Tibial artery (tissue), 4 donors: ENCODE measurements at regions of chr11 and their contacts with region 1.

Region 1: DNA sequence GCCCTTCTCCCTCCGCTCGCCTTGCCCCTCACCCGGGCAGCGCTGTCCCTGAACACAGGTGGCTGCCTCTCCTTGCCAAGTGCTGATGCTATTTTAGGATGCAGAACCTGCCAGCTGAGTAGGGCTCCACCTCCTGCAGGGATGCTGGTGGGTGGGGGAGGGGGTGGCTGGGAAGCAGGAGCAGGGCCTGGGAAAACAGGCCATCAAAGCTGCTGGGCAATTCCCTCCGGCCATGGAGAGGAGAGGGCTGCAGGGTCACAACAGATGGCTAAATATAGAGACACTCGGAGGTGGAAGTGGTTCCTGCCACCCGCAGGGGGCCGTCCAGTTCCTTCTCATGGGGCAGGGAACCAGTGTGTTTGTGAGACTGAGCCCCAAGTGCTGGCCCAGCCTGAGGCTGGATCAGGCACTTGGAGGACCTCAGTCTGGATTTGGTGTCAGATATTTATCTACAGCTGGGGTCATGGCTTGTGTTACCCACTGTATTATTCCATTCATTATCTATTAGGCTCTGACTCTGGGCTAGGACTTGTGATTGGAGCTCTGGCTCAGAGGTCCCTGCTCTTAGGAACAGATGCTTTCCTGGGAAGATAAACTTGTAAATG is 59.6 kb downstream of the LRRC32 start:
- DNase-seq: peak in 1 of 2 donors; percentile 83
- H3K4me3 ChIP-seq: no peak overlapping the region
- H3K27ac ChIP-seq: peak overlapping the region; percentile 49 to 87
- H3K4me1 ChIP-seq: peaks cover 0 to 70% (median 48%) of the 10 kb centered on the region in 4 donors
- H3K27me3 ChIP-seq: no peaks in the 10 kb centered on the region
- CTCF ChIP-seq: peak; percentile 22 to 27

Region 2: DNA sequence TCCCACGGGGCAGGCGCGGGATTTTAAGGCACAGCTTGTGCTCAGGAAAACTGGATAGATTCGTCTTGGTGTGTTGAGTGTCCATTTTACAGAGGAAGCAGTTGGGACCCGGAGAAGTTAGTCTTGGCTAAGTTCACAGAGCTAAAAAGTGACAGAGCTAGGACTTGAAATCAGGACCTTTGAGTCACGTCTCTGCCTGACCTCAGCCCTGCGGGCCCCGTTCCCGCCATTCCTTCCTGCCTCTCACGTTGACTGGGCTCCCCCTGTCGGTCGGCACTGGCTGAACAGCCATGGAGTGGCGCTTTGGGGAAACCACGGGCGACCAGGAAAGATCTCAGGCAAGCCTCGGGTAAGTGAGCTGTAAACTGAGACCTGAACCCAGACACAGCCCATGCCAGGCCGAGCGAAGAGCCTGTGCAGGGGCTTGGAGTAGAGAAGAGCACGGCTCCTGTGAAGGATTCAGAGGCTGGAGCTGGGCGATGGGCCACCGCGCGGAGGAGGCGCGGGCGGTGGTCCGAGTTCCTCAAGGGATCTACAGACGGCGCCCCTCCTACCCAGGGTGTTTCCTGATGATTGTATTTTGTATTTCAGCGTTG is 458.8 kb before region 1 on chr11:
- intact Hi-C with region 1: no loop called
- DNase-seq: peak; percentile 92 to 93
- H3K4me3 ChIP-seq: peak overlapping the region; percentile 26 to 31
- H3K27ac ChIP-seq: no peak overlapping the region
- H3K4me1 ChIP-seq: peaks cover 0 to 10% (median 4%) of the 10 kb centered on the region in 4 donors
- H3K27me3 ChIP-seq: no peaks in the 10 kb centered on the region
- CTCF ChIP-seq: peak; percentile 93 to 97

Region 3: GRCh38 chr11:76653674-76654284 is 42.8 kb after region 1 on chr11:
- intact Hi-C with region 1: no loop called
- DNase-seq: peak; percentile 71 to 89
- H3K4me3 ChIP-seq: no peak overlapping the region
- H3K27ac ChIP-seq: peak overlapping the region; percentile 80 to 91
- H3K4me1 ChIP-seq: peaks cover 4 to 87% (median 72%) of the 10 kb centered on the region in 4 donors
- H3K27me3 ChIP-seq: no peaks in the 10 kb centered on the region
- CTCF ChIP-seq: no peak

Region 4: DNA sequence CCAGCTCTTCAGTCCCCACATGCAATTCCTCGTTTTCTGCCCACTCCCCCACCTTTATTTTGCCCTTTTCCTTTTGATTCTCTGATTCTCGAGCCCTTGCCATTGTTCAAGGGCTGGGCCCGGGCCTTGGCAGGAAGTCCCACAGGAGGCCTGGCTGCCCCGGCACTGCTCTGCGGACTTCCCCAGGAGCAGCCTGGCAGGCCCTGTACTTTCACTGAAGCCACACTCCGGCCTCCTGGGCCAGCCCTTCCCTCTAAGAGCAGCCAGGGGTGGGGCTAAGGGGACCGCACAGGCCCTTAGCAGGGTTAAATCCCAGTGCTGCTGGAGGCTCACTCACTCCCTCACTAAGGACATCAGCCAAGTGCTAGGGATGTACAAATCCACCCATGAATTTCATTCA is 55.4 kb after region 1 on chr11:
- intact Hi-C with region 1: loop called (anchors 5 kb)
- DNase-seq: peak; percentile 54 to 87
- H3K4me3 ChIP-seq: peak overlapping the region; percentile 83 to 91
- H3K27ac ChIP-seq: peak overlapping the region; percentile 90 to 91
- H3K4me1 ChIP-seq: peaks cover 6 to 91% (median 54%) of the 10 kb centered on the region in 4 donors
- H3K27me3 ChIP-seq: no peaks in the 10 kb centered on the region
- CTCF ChIP-seq: no peak